ENCODE measurements at regions of chr6 and their contacts with region 1.

Region 1: GRCh38 chr6:7238900-7239589 is 74.0 kb downstream of the SSR1 start:
- DNase-seq: peak; percentile 93
- ATAC-seq: peak; percentile 85
- H3K4me3 Mint-ChIP-seq: no peak overlapping the region
- H3K27ac Mint-ChIP-seq: peak overlapping the region; percentile 47
- H3K4me1 Mint-ChIP-seq: peaks cover 35% of the 10 kb centered on the region
- H3K27me3 Mint-ChIP-seq: no peaks in the 10 kb centered on the region
- CTCF ChIP-seq: peak; percentile 68

Region 2: GRCh38 chr6:6676910-6677441 is 562.1 kb before region 1 on chr6:
- CTCF ChIA-PET with region 1: interaction called, 24 read pairs
- POLR2A ChIA-PET with region 1: no interaction called
- intact Hi-C with region 1: loop called (anchors 5 kb)
- DNase-seq: peak; percentile 87
- ATAC-seq: peak; percentile 93
- H3K4me3 Mint-ChIP-seq: peak overlapping the region; percentile 19
- H3K27ac Mint-ChIP-seq: no peak overlapping the region
- H3K4me1 Mint-ChIP-seq: peaks cover 6% of the 10 kb centered on the region
- H3K27me3 Mint-ChIP-seq: no peaks in the 10 kb centered on the region
- CTCF ChIP-seq: peak; percentile 98

Region 3: GRCh38 chr6:6724539-6725467 is 514.2 kb before region 1 on chr6:
- CTCF ChIA-PET with region 1: interaction called, 27 read pairs
- POLR2A ChIA-PET with region 1: interaction called, 3 read pairs
- intact Hi-C with region 1: no loop called
- DNase-seq: peak; percentile 72
- ATAC-seq: peak; percentile 81
- H3K4me3 Mint-ChIP-seq: peak overlapping the region; percentile 20
- H3K27ac Mint-ChIP-seq: no peak overlapping the region
- H3K4me1 Mint-ChIP-seq: peaks cover 5% of the 10 kb centered on the region
- H3K27me3 Mint-ChIP-seq: peaks cover 8% of the 10 kb centered on the region
- CTCF ChIP-seq: peak; percentile 45

Region 4: GRCh38 chr6:6843057-6843638 is 395.9 kb before region 1 on chr6:
- CTCF ChIA-PET with region 1: no interaction called
- POLR2A ChIA-PET with region 1: no interaction called
- intact Hi-C with region 1: no loop called
- DNase-seq: no peak
- ATAC-seq: no peak
- H3K4me3 Mint-ChIP-seq: no peak overlapping the region
- H3K27ac Mint-ChIP-seq: no peak overlapping the region
- H3K4me1 Mint-ChIP-seq: no peaks in the 10 kb centered on the region
- H3K27me3 Mint-ChIP-seq: peaks cover 7% of the 10 kb centered on the region
- CTCF ChIP-seq: no peak

Region 5: GRCh38 chr6:6918216-6918983 is 320.6 kb before region 1 on chr6:
- CTCF ChIA-PET with region 1: interaction called, 6 read pairs
- POLR2A ChIA-PET with region 1: no interaction called
- intact Hi-C with region 1: loop called (anchors 10 kb)
- DNase-seq: peak; percentile 95
- ATAC-seq: peak; percentile 94
- H3K4me3 Mint-ChIP-seq: no peak overlapping the region
- H3K27ac Mint-ChIP-seq: no peak overlapping the region
- H3K4me1 Mint-ChIP-seq: peaks cover 36% of the 10 kb centered on the region
- H3K27me3 Mint-ChIP-seq: peaks cover 22% of the 10 kb centered on the region
- CTCF ChIP-seq: no peak

Region 6: DNA sequence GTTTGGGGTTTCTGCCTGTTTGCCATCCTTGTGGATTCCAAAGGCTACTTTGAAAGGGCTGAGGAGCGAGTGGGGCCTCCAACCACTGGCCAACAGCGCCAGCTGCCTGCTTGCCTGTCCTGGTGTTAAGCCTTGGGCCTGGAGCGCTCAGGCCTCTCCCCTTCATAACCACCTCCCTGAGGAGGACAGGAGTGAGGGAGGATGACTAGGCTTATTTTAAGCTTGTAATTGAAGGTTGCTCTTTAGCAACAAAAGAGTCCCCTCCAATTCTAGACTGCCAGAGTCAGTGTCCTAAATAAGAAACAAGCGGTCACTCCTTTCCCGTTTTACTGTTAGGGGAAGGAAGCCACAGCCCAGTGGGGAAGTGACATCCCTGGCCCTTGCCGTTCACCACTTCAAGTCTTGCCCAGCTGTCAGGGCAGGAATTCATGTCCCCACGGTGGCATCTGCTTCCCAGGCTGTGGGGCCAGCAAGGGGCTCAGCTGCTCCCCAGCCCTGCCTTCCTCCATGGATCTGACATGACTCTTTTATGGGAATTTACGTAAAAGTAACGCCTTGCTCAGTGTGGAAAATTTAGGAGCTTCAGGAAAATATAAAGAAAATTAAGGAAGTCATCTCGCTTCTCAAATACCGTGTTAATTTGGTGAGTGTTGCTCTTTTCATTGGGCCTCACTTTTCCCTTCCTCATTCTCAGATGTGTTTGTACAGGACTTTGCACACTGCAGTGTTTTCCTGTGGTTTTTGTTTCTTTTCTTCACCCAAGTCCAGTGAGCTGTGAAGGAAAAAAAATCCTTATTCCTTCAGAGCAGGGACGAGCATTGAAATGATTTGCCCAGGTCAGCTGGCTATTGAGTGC is 16.2 kb after region 1 on chr6:
- CTCF ChIA-PET with region 1: interaction called, 21 read pairs
- POLR2A ChIA-PET with region 1: no interaction called
- intact Hi-C with region 1: no loop called
- DNase-seq: no peak
- ATAC-seq: no peak
- H3K4me3 Mint-ChIP-seq: no peak overlapping the region
- H3K27ac Mint-ChIP-seq: no peak overlapping the region
- H3K4me1 Mint-ChIP-seq: no peaks in the 10 kb centered on the region
- H3K27me3 Mint-ChIP-seq: peaks cover 7% of the 10 kb centered on the region
- CTCF ChIP-seq: no peak

Region 7: DNA sequence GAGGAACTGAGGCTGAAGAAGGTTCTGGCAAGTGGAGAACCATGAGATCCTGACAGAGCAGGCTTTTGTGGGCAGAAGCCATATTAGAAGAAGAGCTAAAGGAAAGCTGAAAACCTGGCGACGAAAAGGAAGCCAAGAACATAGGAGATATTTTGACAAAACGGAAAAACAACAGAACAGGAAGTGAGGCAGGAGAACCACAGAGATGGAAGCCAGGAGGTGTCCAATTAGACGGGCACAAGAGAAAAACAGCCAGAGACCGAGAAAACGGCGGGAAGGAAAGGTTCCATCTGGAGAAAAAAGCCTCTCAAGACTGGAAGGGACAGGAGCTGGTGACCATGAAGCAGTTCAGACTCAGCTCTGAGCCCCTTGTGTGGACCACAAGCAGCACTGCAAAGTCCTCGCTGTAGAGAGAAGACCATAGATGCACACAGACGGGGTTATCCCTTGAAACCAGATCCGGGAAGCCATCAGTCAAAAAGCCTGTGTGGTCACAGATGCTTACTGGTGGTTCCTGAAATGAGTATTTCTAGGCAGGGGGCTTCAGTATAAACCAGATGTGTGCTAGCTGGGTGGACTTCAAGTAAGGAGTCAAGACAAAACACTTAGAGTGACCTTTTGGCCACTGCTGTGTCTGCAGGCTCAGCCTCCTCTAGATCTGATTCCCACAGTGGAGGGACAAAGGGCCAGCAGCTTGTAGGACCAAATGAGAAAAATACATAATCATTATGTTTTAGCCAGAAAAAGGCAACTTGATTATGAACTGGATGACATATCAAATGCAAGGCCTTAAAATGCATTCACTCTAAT is 43.3 kb after region 1 on chr6:
- CTCF ChIA-PET with region 1: no interaction called
- POLR2A ChIA-PET with region 1: no interaction called
- intact Hi-C with region 1: no loop called
- DNase-seq: peak; percentile 15
- ATAC-seq: peak; percentile 67
- H3K4me3 Mint-ChIP-seq: no peak overlapping the region
- H3K27ac Mint-ChIP-seq: peak overlapping the region; percentile 69
- H3K4me1 Mint-ChIP-seq: peaks cover 16% of the 10 kb centered on the region
- H3K27me3 Mint-ChIP-seq: no peaks in the 10 kb centered on the region
- CTCF ChIP-seq: no peak

Region 8: DNA sequence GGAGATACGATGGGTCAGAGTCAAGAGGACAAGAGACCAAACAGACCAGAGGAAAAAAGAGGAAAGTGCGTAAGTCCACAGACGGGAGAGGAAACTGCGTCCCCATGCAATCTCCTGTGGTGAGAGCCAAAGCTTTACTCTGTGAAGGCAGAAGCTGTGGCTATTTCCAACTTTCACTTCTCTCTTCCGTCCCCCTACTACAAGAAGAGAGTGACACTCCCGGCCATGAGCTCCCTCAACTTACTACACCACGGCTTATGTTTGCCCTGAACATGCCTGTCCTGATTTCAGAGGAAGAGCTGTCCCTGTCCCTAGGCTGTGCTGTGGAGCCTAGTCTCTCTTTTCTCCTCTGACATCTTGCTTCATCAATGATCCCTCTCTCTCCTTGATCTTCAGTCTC is 85.5 kb after region 1 on chr6:
- CTCF ChIA-PET with region 1: no interaction called
- POLR2A ChIA-PET with region 1: no interaction called
- intact Hi-C with region 1: no loop called
- DNase-seq: no peak
- ATAC-seq: no peak
- H3K4me3 Mint-ChIP-seq: no peak overlapping the region
- H3K27ac Mint-ChIP-seq: no peak overlapping the region
- H3K4me1 Mint-ChIP-seq: no peaks in the 10 kb centered on the region
- H3K27me3 Mint-ChIP-seq: no peaks in the 10 kb centered on the region
- CTCF ChIP-seq: no peak

Measured in activated CD8-positive, alpha-beta T cell treated with anti-CD3 and anti-CD28 coated beads for 36 hours (primary cell).